Heart right ventricle (tissue), 16 donors: ENCODE measurements at regions of chr1 and their contacts with region 1.

Region 1: DNA sequence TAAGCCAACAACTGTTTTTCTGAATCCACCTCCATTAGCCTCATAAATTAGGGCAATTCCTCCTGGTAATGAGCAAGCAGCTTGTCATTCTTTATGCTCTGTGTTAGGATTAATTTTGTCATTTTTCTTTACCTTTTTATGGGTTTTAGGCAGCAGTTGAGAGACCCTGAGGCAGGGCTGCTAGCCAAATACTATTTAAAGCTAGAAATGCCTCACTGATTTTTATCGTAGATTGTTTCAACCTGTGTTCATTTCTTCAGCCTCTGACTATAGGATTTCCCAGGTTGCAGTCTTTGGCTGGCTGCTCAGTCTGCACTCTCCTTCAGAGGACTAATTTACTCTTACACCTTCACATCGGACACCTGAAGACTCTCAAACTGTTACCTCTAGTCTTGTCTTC is 61.9 kb upstream of the RABGAP1L start:
- DNase-seq: no peak
- ATAC-seq: no peak
- H3K4me3 ChIP-seq: no peak overlapping the region
- H3K27ac ChIP-seq: no peak overlapping the region
- H3K4me1 ChIP-seq: no peaks in the 10 kb centered on the region
- H3K27me3 ChIP-seq: no peaks in the 10 kb centered on the region
- CTCF ChIP-seq: no peak

Region 2: GRCh38 chr1:174051956-174052355 is 45.5 kb before region 1 on chr1:
- intact Hi-C with region 1: no loop called
- DNase-seq: peak in 1 of 2 donors; percentile 41
- ATAC-seq: peak in 6 of 8 donors; percentile 47 to 81 (median 64)
- H3K4me3 ChIP-seq: no peak overlapping the region
- H3K27ac ChIP-seq: no peak overlapping the region
- H3K4me1 ChIP-seq: no peaks in the 10 kb centered on the region
- H3K27me3 ChIP-seq: no peaks in the 10 kb centered on the region
- CTCF ChIP-seq: no peak

Region 3: GRCh38 chr1:174165471-174166137 is 68.2 kb after region 1 on chr1:
- intact Hi-C with region 1: no loop called
- DNase-seq: peak in 1 of 2 donors; percentile 23
- ATAC-seq: peak in 6 of 8 donors; percentile 31 to 66 (median 50)
- H3K4me3 ChIP-seq: no peak overlapping the region
- H3K27ac ChIP-seq: peak overlapping the region in 9 of 10 donors; percentile 42 to 86 (median 72)
- H3K4me1 ChIP-seq: peaks cover 4 to 77% (median 39%) of the 10 kb centered on the region in 9 donors
- H3K27me3 ChIP-seq: no peaks in the 10 kb centered on the region
- CTCF ChIP-seq: no peak

Region 4: DNA sequence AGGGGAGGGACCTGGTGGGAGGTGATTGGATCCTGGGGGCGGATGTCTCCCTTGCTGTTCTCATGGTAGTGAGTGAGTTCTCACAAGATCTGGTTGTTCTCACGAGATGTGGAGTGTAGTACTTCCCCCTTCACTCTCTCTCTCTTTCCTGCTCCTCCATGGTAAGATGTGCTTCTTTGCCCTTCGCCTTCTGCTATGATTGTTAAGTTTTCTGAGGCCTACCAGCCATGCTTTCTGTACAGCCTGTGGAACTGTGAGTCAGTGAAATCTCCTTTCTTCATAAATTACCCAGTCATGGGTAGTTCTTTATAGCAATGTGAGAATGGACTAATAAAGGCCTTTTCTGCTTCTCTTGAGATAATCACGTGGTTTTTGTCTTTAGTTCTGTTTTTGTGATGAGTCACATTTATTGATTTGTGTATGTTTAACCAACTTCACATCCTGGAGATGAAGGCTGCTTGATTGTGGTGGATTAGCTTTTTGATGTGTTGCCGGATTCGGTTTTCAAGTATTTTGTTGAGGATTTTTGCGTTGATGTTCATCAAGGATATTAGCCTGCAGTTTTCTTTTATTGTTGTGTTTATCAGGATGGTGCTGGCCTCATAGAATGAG is 107.4 kb after region 1 on chr1:
- intact Hi-C with region 1: loop called in 3 of 10 experiments (anchors 5 to 10 kb)
- DNase-seq: no peak
- ATAC-seq: peak in 3 of 8 donors; percentile 19 to 28 (median 22)
- H3K4me3 ChIP-seq: no peak overlapping the region
- H3K27ac ChIP-seq: peak overlapping the region in 5 of 10 donors; percentile 26 to 75 (median 47)
- H3K4me1 ChIP-seq: peaks cover 0 to 40% (median 14%) of the 10 kb centered on the region in 9 donors
- H3K27me3 ChIP-seq: no peaks in the 10 kb centered on the region
- CTCF ChIP-seq: no peak

Region 5: DNA sequence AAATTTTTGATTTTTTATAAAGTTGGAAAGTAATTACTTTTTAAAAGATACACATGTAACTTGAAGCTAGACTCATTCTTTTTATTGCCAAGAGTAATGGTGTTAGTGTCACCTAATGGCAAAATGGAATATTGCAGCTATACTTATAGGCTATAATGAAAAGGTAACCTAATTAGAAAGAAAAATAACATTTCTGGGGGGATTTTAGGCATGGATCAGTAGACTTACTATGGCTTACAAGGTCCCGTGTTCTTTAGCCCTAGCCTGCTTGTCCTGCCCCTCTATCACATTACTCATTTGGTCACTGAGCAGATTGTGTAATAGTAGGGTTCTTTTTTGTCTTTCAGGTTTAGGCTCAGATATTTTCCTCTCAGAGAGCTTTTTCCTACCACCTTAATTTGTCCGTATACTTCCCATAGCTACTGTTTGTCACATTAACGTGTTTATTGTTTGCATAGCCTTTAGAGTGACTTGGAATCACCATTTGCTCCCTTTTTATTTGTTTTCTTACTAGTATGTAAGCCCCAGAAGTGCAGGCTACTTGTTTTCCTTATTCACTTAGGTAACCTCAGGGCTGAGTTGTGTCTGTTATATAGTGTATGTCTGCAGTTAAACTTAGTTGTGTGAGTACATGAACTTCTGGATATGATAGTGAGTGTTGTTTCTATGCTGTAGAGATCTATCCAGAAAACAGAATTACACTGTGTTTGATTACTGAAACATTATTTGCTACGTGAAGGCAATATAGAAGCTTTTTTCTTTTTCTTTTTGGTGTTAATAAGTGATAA is 120.6 kb after region 1 on chr1:
- intact Hi-C with region 1: loop called in 8 of 10 experiments (anchors 2 to 10 kb)
- DNase-seq: no peak
- ATAC-seq: peak in 7 of 8 donors; percentile 16 to 74 (median 52)
- H3K4me3 ChIP-seq: no peak overlapping the region
- H3K27ac ChIP-seq: peak overlapping the region in 1 of 10 donors; percentile 35
- H3K4me1 ChIP-seq: peaks cover 0 to 21% (median 8%) of the 10 kb centered on the region in 9 donors
- H3K27me3 ChIP-seq: no peaks in the 10 kb centered on the region
- CTCF ChIP-seq: peak; percentile 51 to 84 (median 75)